ENCODE measurements at regions of chr22 and their contacts with region 1.

Region 1: GRCh38 chr22:41157083-41157482 is 48.0 kb upstream of the L3MBTL2 start:
- DNase-seq: no peak
- H3K4me3 ChIP-seq: no peak overlapping the region
- H3K4me3 Mint-ChIP-seq: no peak overlapping the region
- H3K27ac Mint-ChIP-seq: no peak overlapping the region
- H3K4me1 ChIP-seq: no peaks in the 10 kb centered on the region
- H3K4me1 Mint-ChIP-seq: no peaks in the 10 kb centered on the region
- H3K27me3 ChIP-seq: no peaks in the 10 kb centered on the region
- H3K27me3 Mint-ChIP-seq: no peaks in the 10 kb centered on the region
- CTCF ChIP-seq: no peak

Region 2: DNA sequence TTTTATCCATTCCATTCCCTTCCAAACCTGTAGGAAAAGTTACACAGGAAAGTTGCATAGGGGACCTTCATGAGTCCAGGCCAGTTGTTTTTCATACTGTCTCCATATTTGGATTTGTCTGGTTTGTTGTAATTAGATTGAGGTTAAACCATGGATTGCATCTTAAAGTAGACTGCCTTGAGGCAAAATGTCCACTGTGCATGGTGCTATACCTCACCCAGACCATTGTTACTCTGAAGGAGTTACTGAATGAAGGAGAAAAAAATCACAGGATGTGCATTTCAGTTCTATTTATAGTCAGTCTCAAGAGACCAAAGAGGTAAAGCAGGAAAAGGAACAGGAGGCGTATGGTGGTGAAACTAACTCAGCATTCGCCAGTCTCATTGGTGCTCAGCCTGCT is 18.5 kb after region 1 on chr22:
- CTCF ChIA-PET with region 1: no interaction called
- POLR2A ChIA-PET with region 1: no interaction called
- intact Hi-C with region 1: loop called (anchors 1 kb)
- DNase-seq: no peak
- H3K4me3 ChIP-seq: no peak overlapping the region
- H3K4me3 Mint-ChIP-seq: no peak overlapping the region
- H3K27ac Mint-ChIP-seq: no peak overlapping the region
- H3K4me1 ChIP-seq: no peaks in the 10 kb centered on the region
- H3K4me1 Mint-ChIP-seq: no peaks in the 10 kb centered on the region
- H3K27me3 ChIP-seq: no peaks in the 10 kb centered on the region
- H3K27me3 Mint-ChIP-seq: no peaks in the 10 kb centered on the region
- CTCF ChIP-seq: no peak

Region 3: DNA sequence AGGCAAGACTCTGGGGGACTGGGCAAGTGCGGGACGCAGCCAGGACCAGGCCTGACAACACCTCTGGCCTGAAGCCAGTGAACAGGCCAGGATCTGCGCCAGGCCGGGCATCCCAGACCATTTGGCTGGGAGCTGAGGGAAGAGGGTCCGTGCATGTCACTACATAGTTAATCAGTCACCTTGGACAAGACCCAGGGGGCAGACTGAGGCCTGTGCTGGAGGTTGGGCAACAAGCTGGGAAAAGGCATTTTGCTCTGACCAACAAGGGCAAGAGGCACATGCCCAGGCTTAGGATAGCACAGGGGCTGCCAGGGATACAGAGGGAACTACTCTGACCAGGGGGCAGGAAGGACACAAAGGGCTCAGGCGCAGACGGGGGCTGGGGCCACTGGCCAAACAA is 90.6 kb after region 1 on chr22:
- CTCF ChIA-PET with region 1: no interaction called
- POLR2A ChIA-PET with region 1: no interaction called
- intact Hi-C with region 1: no loop called
- DNase-seq: no peak
- H3K4me3 ChIP-seq: no peak overlapping the region
- H3K4me3 Mint-ChIP-seq: no peak overlapping the region
- H3K27ac Mint-ChIP-seq: no peak overlapping the region
- H3K4me1 ChIP-seq: no peaks in the 10 kb centered on the region
- H3K4me1 Mint-ChIP-seq: no peaks in the 10 kb centered on the region
- H3K27me3 ChIP-seq: no peaks in the 10 kb centered on the region
- H3K27me3 Mint-ChIP-seq: no peaks in the 10 kb centered on the region
- CTCF ChIP-seq: no peak

Region 4: GRCh38 chr22:41682033-41682807 is 525.1 kb after region 1 on chr22:
- CTCF ChIA-PET with region 1: no interaction called
- POLR2A ChIA-PET with region 1: no interaction called
- intact Hi-C with region 1: no loop called
- DNase-seq: peak; percentile 86 to 90
- H3K4me3 ChIP-seq: peak overlapping the region; percentile 62
- H3K4me3 Mint-ChIP-seq: peak overlapping the region; percentile 82
- H3K27ac Mint-ChIP-seq: peak overlapping the region; percentile 92
- H3K4me1 ChIP-seq: peaks cover 3% of the 10 kb centered on the region; the same call in 1 of the 2 replicates
- H3K4me1 Mint-ChIP-seq: no peaks in the 10 kb centered on the region
- H3K27me3 ChIP-seq: no peaks in the 10 kb centered on the region
- H3K27me3 Mint-ChIP-seq: no peaks in the 10 kb centered on the region
- CTCF ChIP-seq: no peak